MCF 10A (cell line): ENCODE measurements at regions of chr17 and their contacts with region 1.

Region 1: DNA sequence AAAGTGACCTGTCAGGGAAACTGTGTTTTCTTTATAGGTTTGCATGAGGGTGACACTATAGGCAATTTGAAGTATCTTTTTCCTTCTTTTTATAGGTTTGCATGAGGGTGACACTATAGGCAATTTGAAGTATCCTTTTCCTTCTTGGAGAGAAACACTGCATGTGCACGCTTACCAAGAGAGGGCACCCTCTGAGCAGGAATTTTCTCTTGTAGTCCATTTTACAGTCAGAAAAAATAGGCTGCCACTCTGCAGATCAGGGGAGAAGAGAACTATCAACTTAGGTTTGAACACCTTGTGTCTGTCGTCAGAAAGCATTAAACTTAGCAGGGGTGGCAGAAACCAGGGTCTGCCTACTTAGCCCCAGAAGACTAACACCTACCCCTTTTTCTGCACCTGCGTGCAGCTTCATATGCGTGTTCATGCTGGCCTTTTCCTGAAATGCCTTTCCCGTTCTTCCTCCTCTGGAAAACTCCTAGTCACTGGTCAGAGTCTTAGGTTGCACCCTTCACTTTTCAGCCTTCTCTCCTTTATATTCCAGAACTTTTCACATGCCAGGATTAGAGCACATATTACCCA is 16.4 kb upstream of the SMIM36 start:
- DNase-seq: peak; percentile 55
- H3K4me3 Mint-ChIP-seq: no peak overlapping the region
- H3K27ac Mint-ChIP-seq: no peak overlapping the region
- H3K4me1 Mint-ChIP-seq: no peaks in the 10 kb centered on the region
- H3K27me3 Mint-ChIP-seq: no peaks in the 10 kb centered on the region
- CTCF ChIP-seq: peak; percentile 78

Region 2: DNA sequence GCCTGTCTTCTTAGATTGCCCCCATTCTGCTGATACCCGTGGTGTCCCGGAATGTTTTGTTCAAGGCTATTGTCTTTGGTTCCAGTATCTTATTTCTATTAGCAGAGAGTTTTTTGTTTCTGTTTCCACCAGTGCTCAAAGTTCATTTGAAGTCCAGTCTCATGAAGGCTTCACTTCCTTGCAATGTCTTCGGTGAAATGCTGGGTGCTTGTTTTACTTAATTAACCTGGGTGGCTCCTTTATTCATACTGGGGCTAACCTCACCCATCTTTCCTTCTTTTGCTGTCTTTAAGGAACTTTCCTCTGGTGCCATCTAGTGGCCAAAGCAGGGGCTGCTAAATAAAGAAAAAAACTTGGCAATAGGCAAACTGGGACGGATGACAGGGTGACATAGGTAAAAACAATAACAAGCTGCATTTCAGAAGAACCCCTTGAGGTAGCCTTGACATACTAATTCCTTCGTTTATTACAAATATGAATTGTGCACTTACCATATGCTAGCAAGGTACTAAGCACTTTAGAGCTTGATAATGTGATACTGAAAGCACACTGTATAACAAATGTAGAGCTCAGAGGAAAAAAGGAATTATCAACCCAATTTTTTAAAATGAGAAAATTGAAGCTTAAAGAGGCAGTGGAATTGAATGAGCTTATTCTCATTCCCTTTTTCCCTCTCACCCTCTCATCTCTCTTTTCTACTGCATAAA is 13.6 kb before region 1 on chr17:
- CTCF ChIA-PET with region 1: interaction called, 18 read pairs
- POLR2A ChIA-PET with region 1: no interaction called
- intact Hi-C with region 1: no loop called
- DNase-seq: peak; percentile 80
- H3K4me3 Mint-ChIP-seq: no peak overlapping the region
- H3K27ac Mint-ChIP-seq: no peak overlapping the region
- H3K4me1 Mint-ChIP-seq: no peaks in the 10 kb centered on the region
- H3K27me3 Mint-ChIP-seq: peaks cover 10% of the 10 kb centered on the region
- CTCF ChIP-seq: peak; percentile 82

Region 3: GRCh38 chr17:55587608-55588139 is 60.0 kb after region 1 on chr17:
- CTCF ChIA-PET with region 1: interaction called, 6 read pairs
- POLR2A ChIA-PET with region 1: no interaction called
- intact Hi-C with region 1: loop called (anchors 1 kb)
- DNase-seq: no peak
- H3K4me3 Mint-ChIP-seq: no peak overlapping the region
- H3K27ac Mint-ChIP-seq: peak overlapping the region; percentile 52
- H3K4me1 Mint-ChIP-seq: peaks cover 23% of the 10 kb centered on the region
- H3K27me3 Mint-ChIP-seq: no peaks in the 10 kb centered on the region
- CTCF ChIP-seq: no peak

Region 4: DNA sequence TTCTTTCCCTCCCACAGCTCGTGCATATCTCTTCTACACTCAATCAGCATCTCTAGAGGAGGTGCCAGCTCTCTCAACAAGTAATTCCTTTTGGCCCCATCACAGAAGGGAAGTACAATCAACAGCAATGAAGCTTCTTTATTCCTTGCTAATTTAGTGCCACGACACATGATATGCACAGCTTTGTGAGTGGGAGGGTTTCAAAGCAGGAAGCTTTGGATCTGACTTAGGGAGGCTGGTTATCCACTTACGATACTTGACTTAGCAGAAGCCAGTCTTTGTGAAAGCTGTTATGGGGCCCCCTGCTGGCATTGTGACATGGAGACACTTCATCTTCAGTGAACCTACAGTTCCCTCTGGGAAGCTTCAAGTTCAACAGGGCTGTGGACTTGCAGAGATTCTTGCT is 114.0 kb after region 1 on chr17:
- CTCF ChIA-PET with region 1: interaction called, 9 read pairs
- POLR2A ChIA-PET with region 1: no interaction called
- intact Hi-C with region 1: loop called (anchors 1 kb)
- DNase-seq: peak; percentile 78
- H3K4me3 Mint-ChIP-seq: no peak overlapping the region
- H3K27ac Mint-ChIP-seq: no peak overlapping the region
- H3K4me1 Mint-ChIP-seq: no peaks in the 10 kb centered on the region
- H3K27me3 Mint-ChIP-seq: no peaks in the 10 kb centered on the region
- CTCF ChIP-seq: peak; percentile 46

Region 5: GRCh38 chr17:55652114-55652823 is 124.6 kb after region 1 on chr17:
- CTCF ChIA-PET with region 1: no interaction called
- POLR2A ChIA-PET with region 1: no interaction called
- intact Hi-C with region 1: no loop called
- DNase-seq: no peak
- H3K4me3 Mint-ChIP-seq: no peak overlapping the region
- H3K27ac Mint-ChIP-seq: no peak overlapping the region
- H3K4me1 Mint-ChIP-seq: no peaks in the 10 kb centered on the region
- H3K27me3 Mint-ChIP-seq: no peaks in the 10 kb centered on the region
- CTCF ChIP-seq: no peak

Region 6: GRCh38 chr17:55735731-55736405 is 208.2 kb after region 1 on chr17:
- CTCF ChIA-PET with region 1: interaction called, 11 read pairs
- POLR2A ChIA-PET with region 1: interaction called, 3 read pairs
- intact Hi-C with region 1: no loop called
- DNase-seq: peak; percentile 69
- H3K4me3 Mint-ChIP-seq: no peak overlapping the region
- H3K27ac Mint-ChIP-seq: no peak overlapping the region
- H3K4me1 Mint-ChIP-seq: peaks cover 41% of the 10 kb centered on the region
- H3K27me3 Mint-ChIP-seq: no peaks in the 10 kb centered on the region
- CTCF ChIP-seq: peak; percentile 50

Region 7: GRCh38 chr17:55783684-55784245 is 256.1 kb after region 1 on chr17:
- CTCF ChIA-PET with region 1: interaction called, 35 read pairs
- POLR2A ChIA-PET with region 1: no interaction called
- intact Hi-C with region 1: no loop called
- DNase-seq: peak; percentile 41
- H3K4me3 Mint-ChIP-seq: no peak overlapping the region
- H3K27ac Mint-ChIP-seq: no peak overlapping the region
- H3K4me1 Mint-ChIP-seq: no peaks in the 10 kb centered on the region
- H3K27me3 Mint-ChIP-seq: no peaks in the 10 kb centered on the region
- CTCF ChIP-seq: no peak

Region 8: DNA sequence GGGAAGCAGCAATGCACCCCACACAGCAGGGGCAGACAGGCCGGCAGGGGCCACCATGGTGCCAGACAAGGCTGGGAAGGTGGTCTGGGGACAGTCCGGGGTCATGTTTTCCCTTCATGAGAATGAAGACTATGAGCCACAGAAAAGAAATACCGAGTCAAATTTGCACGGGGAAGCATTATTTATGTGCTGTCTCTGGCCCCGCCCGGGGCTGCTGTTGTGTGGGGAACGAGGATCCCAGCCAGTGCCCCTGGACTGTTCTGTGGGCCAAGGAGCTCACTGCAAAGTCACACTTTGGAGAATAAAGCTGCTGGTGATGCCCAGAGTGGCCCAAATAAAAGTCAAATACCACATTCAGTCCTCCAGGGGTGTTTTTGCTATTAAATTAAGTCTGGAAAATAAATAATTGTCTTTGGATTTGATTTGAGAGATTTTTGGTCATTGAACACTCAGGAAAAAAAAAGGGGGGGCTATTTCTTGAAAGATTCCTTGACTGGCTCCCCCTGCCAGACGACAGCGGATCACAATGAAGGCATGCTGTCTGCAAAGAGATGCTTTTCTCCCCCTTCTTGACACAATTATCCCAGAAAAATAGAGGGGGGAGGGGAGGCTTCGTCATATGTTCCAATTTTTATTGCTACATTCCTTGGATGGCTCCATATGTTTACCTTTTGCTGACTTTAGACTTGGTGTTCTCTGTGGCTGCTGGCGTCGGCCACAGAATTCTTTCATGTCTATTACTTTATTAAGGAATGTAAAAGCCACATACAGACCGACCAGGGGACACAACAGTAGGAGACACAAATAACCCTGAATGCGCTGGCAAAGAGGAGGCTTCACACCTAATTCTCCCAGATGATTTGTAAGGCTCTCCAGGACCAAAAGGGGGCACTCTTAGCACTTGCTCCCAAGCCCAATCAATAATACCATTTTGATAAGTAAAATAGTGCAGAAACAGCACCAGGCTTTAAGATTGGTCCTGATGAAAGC is 598.5 kb after region 1 on chr17:
- CTCF ChIA-PET with region 1: no interaction called
- POLR2A ChIA-PET with region 1: no interaction called
- intact Hi-C with region 1: loop called (anchors 5 kb)
- DNase-seq: peak; percentile 77
- H3K4me3 Mint-ChIP-seq: no peak overlapping the region
- H3K27ac Mint-ChIP-seq: no peak overlapping the region
- H3K4me1 Mint-ChIP-seq: no peaks in the 10 kb centered on the region
- H3K27me3 Mint-ChIP-seq: no peaks in the 10 kb centered on the region
- CTCF ChIP-seq: peak; percentile 73